ENCODE measurements at regions of chr15 and their contacts with region 1.

Region 1: DNA sequence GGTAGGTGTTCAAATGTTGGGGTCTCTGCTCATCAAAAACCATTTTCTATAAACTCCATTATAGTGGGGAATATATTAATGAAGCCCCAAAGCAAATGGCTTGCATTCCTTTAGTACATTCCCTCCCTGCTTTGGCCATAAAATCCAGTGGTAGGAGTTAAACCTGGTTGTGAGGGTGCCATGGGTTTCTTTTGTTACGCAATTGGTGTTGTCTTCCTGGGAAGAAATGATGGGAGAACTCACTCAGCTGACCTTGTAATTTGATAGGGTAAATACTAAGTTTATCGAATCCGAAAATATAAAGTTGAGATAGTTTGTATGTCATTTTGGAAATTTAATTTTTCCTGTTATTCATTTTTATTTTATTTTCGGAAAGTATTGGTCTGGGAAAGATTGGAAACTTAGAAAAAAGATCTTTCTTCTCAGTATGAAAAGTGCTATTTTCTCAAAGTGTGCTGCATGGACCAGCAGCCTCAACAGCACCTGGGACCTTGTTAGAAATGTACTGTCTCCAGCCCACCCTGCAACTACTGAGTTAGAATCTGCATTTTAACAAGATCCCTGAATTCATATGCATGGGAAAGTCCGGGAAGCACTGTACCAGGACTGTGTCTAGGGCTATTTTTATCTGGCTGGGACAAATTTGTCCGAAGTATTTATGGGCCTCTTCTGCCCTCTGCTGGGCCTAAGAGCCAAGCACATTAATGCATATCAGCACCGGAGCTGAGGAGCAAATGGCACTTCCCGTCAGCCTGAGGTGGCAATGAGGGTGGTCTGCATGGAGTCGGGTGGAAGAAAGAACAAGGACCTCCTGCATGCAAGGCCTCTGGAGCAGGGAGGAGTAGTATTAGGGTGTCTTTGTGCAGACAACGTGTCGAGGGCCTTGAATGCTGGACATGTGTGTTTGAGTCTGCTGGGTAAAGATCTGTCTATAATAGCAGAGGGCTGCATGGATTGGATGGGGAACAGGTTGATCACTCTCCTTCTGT is 54.7 kb downstream of the FAM81A start:
- DNase-seq: peak; percentile 55
- H3K4me3 ChIP-seq: no peak overlapping the region
- H3K27ac ChIP-seq: no peak overlapping the region
- H3K4me1 ChIP-seq: no peaks in the 10 kb centered on the region
- H3K27me3 ChIP-seq: no peaks in the 10 kb centered on the region
- CTCF ChIP-seq: peak; percentile 84 to 88

Region 2: DNA sequence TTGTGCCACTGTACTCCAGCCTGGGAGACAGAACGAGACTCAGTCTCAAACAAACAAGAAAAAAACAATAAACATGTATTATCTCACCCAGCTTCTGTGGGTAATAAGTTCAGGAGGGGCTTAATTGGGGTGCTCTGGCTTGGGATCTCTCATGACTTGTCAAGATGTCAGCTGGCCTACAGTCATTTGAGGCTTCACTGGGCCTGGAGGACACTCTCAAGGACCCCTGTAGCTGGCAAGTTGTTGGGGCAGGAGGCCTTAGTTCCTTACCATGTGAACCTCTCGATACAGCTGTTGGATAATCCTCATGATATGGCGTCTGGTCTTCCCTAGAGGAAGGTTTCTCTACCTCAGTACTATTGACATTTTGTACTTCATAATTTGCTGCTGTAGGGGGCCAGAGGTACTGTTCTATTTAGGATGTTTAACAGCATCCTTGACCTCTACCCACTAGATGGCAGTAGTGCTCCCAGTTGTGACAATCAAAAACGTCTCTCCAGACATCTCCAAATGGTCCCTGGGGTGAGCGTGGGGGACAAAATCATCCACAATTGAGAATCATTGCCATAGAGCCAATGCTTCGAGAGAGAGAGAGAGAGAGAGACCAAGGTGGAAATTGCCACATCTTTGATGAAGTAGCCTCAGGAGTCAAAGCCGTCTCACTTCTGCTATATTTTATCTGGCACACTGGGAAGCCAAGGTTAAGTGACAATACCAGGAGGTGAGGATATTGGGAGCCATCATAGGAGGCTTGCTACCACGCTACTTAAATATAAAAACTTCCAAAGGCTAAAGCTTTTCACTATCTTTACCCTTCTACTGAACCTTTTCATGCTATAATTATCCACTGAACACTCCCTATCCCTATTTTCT is 535.3 kb before region 1 on chr15:
- CTCF ChIA-PET with region 1: no interaction called
- dilution Hi-C with region 1: no loop called
- in situ Hi-C with region 1: no loop called
- intact Hi-C with region 1: loop called (anchors 2 kb)
- DNase-seq: peak; percentile 44
- H3K4me3 ChIP-seq: no peak overlapping the region
- H3K27ac ChIP-seq: no peak overlapping the region
- H3K4me1 ChIP-seq: peaks cover 8% of the 10 kb centered on the region
- H3K27me3 ChIP-seq: no peaks in the 10 kb centered on the region
- CTCF ChIP-seq: peak; percentile 78 to 88

Region 3: DNA sequence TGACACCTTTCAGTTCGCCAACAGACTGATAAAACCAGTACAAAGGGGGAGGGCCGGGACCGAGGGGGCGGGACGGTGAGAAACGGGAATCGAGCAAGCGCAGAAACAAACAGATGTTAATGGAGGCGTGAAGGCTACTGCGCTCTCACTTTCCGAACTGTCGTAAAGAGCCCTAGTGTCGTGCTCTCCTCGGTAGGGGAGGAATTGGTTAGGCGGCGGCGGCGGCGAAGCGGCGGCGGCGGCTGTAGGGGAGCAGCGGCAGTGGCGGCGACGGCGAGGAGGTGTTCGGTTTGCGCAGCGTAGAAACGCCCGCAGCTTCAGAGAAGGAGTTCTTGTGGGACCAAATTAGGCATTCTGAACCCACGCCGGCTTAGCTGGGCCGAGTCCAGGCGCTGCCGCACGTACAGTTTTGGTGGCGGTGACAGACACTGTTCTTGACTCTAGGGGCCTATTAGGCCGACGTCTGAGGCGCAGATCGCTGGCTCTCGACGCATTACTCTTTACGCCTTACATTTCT is 505.1 kb before region 1 on chr15 and contains the start of gene RNF111:
- CTCF ChIA-PET with region 1: no interaction called
- dilution Hi-C with region 1: no loop called
- in situ Hi-C with region 1: loop called (anchors 10 kb)
- intact Hi-C with region 1: no loop called
- DNase-seq: peak; percentile 95
- H3K4me3 ChIP-seq: peak within 1 kb of the TSS; percentile 67 to 95 (median 89)
- H3K27ac ChIP-seq: peak within 1 kb of the TSS; percentile 75
- H3K4me1 ChIP-seq: peaks cover 11% of the 10 kb centered on the region
- H3K27me3 ChIP-seq: no peaks in the 10 kb centered on the region
- CTCF ChIP-seq: no peak
- total RNA-seq, gene RNF111: 22.0 to 30.7 TPM

Region 4: DNA sequence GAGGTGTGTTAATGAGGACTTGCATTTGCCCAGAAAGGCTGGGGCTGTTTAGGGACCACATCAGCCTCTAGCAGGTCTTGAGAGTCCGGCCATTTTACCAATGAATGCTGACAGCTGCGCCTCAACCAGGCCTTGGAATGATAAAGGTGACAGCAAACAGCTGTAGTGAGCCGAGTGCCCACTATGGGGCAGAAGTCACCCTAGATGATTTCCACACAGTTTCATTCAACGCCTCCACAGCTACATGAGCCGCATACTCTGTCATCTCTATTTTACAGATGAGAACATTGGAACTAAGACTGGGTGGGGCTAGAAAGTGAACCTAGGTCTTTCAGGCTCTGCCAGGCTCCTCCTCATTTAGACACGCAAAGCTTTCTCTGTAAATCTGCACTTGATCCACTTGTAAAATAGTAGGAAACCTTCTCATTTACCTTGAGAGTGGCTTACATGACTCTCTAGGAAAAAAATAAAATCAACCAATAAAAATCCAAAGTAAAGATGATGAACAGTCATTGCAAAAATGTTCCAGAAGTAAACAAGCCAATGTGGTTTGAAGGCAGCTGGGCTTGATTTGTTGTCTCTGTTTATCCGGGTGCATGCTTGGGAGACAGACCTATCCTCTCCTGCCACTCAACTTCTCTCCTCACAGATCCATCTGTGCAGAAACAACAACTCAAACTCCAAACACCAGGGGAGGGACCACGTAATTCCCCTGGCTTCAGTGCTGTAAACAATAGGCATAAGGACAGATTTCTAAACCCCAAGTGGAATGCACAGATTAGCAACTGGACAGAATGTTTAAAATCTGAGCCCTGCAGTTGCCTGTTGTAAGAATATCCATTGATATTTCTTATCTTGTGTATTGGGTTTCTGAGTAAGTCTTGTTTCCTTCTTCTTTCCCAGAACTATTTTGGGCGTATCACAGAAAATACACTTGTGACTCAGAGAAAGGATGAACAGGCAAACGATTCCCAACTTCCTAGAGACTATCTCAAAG is 317.6 kb before region 1 on chr15:
- CTCF ChIA-PET with region 1: no interaction called
- dilution Hi-C with region 1: no loop called
- in situ Hi-C with region 1: no loop called
- intact Hi-C with region 1: loop called (anchors 1 kb)
- DNase-seq: peak; percentile 67
- H3K4me3 ChIP-seq: no peak overlapping the region
- H3K27ac ChIP-seq: no peak overlapping the region
- H3K4me1 ChIP-seq: peaks cover 18% of the 10 kb centered on the region
- H3K27me3 ChIP-seq: no peaks in the 10 kb centered on the region
- CTCF ChIP-seq: peak; percentile 26 to 34

Region 5: GRCh38 chr15:59274126-59274970 is 218.3 kb before region 1 on chr15:
- CTCF ChIA-PET with region 1: no interaction called
- dilution Hi-C with region 1: no loop called
- in situ Hi-C with region 1: loop called in 1 of 2 experiments (anchors 25 kb)
- intact Hi-C with region 1: no loop called
- DNase-seq: peak; percentile 79
- H3K4me3 ChIP-seq: no peak overlapping the region
- H3K27ac ChIP-seq: peak overlapping the region; percentile 61
- H3K4me1 ChIP-seq: peaks cover 62% of the 10 kb centered on the region
- H3K27me3 ChIP-seq: no peaks in the 10 kb centered on the region
- CTCF ChIP-seq: no peak

Region 6: GRCh38 chr15:59419170-59419569 is 73.5 kb before region 1 on chr15:
- CTCF ChIA-PET with region 1: no interaction called
- dilution Hi-C with region 1: loop called (anchors 5 kb)
- in situ Hi-C with region 1: no loop called
- intact Hi-C with region 1: no loop called
- DNase-seq: no peak
- H3K4me3 ChIP-seq: no peak overlapping the region
- H3K27ac ChIP-seq: no peak overlapping the region
- H3K4me1 ChIP-seq: no peaks in the 10 kb centered on the region
- H3K27me3 ChIP-seq: no peaks in the 10 kb centered on the region
- CTCF ChIP-seq: no peak

Region 7: DNA sequence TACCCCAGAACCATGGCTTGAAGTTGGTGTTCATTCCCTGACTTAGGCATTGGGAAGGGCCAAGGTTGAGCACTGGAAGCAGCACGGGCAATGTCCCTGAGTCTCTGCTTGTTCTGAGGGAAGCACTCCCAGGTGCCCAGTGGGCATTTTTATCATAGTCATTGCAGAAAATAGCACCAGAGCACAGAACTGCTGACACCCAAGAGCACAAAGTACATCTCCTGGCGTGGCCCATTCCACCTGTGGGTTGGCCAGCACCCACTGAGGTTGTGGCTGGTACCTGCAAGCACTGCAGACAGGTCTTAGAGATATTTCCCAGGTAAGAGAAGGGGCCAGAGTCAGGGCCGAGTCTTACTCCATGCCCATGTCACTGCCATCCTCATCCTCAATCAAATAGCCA is 90.4 kb after region 1 on chr15:
- CTCF ChIA-PET with region 1: no interaction called
- dilution Hi-C with region 1: no loop called
- in situ Hi-C with region 1: no loop called
- intact Hi-C with region 1: no loop called
- DNase-seq: no peak
- H3K4me3 ChIP-seq: no peak overlapping the region
- H3K27ac ChIP-seq: no peak overlapping the region
- H3K4me1 ChIP-seq: peaks cover 10% of the 10 kb centered on the region
- H3K27me3 ChIP-seq: no peaks in the 10 kb centered on the region
- CTCF ChIP-seq: no peak

Measured in mammary epithelial cell (primary cell).